CD8-positive, alpha-beta T cell (primary cell): ENCODE measurements at regions of chr1 and their contacts with region 1.

Region 1: DNA sequence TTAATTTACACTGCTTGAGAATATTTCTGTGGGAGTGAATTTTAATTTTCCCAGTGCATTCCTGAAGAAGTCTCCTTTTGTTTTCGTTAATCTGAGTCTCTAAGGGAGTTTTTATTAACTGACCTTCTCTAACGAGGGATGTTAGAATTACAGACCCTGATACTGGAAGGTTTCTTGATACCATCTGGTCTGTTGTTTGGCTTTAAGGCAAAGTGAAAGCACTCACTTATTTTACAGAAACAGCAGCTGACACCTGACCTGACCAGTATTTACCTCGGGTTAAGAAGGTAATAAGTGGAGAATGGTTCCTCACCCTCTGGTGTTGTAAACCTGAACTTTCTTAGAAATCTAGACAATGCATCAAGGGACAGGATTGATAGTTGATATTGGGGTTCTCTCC is 12.4 kb downstream of the CDC14A start:
- DNase-seq: no peak
- ATAC-seq: no peak
- H3K4me3 ChIP-seq: no peak overlapping the region
- H3K4me3 Mint-ChIP-seq: peak overlapping the region; percentile 54
- H3K27ac ChIP-seq: no peak overlapping the region
- H3K27ac Mint-ChIP-seq: peak overlapping the region; percentile 78
- H3K4me1 ChIP-seq: peaks cover 41% of the 10 kb centered on the region
- H3K4me1 Mint-ChIP-seq: peaks cover 84% of the 10 kb centered on the region
- H3K27me3 ChIP-seq: no peaks in the 10 kb centered on the region
- H3K27me3 Mint-ChIP-seq: no peaks in the 10 kb centered on the region
- CTCF ChIP-seq: no peak

Region 2: DNA sequence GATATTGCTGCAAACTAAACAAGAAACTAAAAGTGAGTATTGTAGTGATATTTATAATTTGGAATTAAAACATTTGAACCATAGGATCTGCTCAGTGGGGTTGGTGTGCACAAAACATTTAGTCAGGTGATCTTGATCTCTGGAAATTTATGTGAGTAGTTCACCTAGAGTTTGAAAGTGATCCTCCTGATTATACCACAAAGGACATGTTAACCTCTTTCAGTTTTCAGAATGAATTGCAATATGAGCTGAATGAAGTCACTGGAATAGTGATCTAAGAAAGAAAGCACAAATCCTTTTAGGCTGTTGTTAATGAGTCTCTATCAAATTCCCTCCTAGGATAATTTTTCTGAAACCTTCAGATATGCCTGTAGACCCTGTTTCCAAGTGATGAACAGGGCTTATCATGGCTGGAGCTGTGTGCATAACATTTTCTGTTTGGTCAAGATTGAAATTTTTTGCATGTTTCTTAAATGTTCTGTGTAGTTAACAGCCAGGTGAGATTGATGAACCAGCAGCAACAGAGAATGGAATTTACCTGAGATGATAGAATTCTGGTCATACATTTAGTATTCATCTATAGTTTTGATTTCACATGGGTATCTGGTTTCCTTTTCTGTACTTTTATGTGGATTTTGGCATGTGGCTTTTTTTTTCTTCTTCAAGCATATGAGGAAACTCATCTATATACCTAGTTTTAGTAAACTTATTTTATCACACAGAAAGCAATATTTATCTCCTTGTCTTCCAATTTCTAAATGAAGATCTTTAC is 13.1 kb after region 1 on chr1:
- CTCF ChIA-PET with region 1: interaction called, 6 read pairs
- POLR2A ChIA-PET with region 1: no interaction called
- intact Hi-C with region 1: loop called in 1 of 2 experiments (anchors 2 kb)
- DNase-seq: peak in 1 of 9 experiments; percentile 40
- ATAC-seq: peak; percentile 39
- H3K4me3 ChIP-seq: no peak overlapping the region
- H3K4me3 Mint-ChIP-seq: peak overlapping the region; percentile 45
- H3K27ac ChIP-seq: no peak overlapping the region
- H3K27ac Mint-ChIP-seq: peak overlapping the region; percentile 63
- H3K4me1 ChIP-seq: peaks cover 46% of the 10 kb centered on the region
- H3K4me1 Mint-ChIP-seq: peaks cover 74% of the 10 kb centered on the region
- H3K27me3 ChIP-seq: no peaks in the 10 kb centered on the region
- H3K27me3 Mint-ChIP-seq: no peaks in the 10 kb centered on the region
- CTCF ChIP-seq: no peak